MCF 10A (cell line): ENCODE measurements at regions of chr22 and their contacts with region 1.

Region 1: DNA sequence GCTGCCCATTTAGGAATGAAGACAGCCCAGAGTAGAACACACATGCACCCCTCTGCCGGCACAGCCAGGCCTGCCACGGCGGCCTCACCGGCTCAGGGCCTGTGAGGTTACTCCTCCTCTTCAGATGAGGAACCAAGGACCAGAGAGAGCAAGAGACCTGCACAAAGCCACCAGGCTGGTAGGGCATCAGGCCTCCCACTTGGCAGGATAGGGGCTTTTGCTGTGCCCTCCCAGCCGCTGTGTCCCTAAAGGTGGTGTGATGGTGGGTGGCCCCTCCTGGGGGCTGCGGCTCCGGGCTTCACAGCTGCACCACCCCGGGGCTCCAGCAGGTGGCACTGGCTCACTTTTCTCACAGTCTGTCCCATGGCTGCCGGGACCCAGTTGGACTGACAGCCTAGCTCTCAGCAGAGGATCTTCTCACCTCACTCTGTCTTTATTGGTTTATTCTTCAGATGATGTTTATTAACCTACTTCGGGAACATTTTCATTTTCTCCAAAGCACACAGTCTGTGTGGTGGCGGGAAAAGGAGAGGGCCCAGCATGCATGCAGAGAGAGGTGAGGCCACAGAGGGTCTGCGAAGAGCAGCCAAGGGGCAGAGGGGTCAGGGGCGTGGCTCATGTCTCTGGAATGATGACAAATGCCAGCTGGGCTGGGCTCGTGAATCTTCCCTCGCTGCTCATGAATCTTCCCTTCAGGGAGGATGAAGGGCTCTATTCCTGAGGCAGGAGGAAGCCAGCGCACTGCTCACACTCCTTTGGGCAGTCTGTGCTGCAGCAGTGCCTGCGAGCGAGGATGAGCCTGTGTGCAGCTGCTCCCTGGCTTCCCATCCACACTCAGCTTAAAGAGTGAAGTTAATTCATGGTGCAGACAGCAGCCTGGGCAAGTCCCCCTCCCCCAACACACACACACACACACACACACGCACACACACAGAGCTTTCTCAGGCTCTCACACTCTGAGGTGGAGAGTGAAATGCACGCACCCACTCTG is 101.1 kb upstream of the PITPNB start:
- DNase-seq: peak; percentile 62
- H3K4me3 Mint-ChIP-seq: no peak overlapping the region
- H3K27ac Mint-ChIP-seq: no peak overlapping the region
- H3K4me1 Mint-ChIP-seq: peaks cover 10% of the 10 kb centered on the region
- H3K27me3 Mint-ChIP-seq: peaks cover 13% of the 10 kb centered on the region
- CTCF ChIP-seq: peak; percentile 86

Region 2: DNA sequence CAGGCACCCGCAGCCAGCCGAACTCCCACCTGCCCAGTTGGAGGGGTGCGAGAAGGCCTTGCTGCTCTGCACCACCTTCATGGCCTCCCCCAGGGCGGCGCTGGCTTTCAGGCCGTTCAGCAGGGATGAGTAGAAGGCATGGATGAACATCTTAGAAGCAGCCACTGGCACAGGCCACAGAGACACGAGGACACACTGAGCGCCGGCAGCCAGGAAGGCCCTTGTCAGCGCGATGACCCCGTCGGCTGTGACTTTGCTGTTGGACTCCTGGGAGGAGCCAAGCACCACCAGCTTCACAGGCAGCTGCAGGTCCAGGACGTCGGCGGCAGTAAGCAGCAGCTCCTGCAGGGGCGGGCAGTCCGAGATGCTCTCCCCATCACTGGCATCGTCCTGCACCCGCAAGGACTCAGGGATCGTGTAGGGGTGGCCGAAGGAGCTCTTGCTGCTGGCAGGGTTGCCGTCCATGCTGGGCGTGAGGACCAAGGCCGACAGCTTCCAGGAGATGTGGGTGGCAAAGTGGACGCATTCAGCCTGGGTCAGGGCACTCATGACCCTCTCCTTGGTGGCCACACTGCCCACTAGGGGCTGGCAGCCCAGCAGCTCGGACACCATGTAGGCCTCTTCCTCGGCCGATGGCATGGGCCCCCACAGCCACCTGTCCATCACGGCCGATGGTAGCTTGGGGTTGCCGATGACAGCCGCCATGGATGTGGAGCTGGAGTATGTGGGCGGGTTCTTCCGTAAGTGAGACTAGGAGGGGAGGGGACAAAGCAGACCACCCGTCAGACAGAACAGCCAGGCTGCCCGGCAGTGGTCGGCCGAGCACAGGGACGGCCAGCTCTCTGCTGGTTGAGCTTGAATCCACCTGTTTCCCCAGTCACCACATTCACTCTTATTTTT is 21.4 kb before region 1 on chr22:
- CTCF ChIA-PET with region 1: interaction called, 10 read pairs
- POLR2A ChIA-PET with region 1: no interaction called
- intact Hi-C with region 1: no loop called
- DNase-seq: no peak
- H3K4me3 Mint-ChIP-seq: no peak overlapping the region
- H3K27ac Mint-ChIP-seq: no peak overlapping the region
- H3K4me1 Mint-ChIP-seq: peaks cover 6% of the 10 kb centered on the region
- H3K27me3 Mint-ChIP-seq: no peaks in the 10 kb centered on the region
- CTCF ChIP-seq: no peak

Region 3: GRCh38 chr22:28034760-28035401 is 14.7 kb after region 1 on chr22:
- CTCF ChIA-PET with region 1: interaction called, 17 read pairs
- POLR2A ChIA-PET with region 1: no interaction called
- intact Hi-C with region 1: no loop called
- DNase-seq: peak; percentile 38
- H3K4me3 Mint-ChIP-seq: no peak overlapping the region
- H3K27ac Mint-ChIP-seq: no peak overlapping the region
- H3K4me1 Mint-ChIP-seq: no peaks in the 10 kb centered on the region
- H3K27me3 Mint-ChIP-seq: peaks cover 46% of the 10 kb centered on the region
- CTCF ChIP-seq: no peak

Region 4: DNA sequence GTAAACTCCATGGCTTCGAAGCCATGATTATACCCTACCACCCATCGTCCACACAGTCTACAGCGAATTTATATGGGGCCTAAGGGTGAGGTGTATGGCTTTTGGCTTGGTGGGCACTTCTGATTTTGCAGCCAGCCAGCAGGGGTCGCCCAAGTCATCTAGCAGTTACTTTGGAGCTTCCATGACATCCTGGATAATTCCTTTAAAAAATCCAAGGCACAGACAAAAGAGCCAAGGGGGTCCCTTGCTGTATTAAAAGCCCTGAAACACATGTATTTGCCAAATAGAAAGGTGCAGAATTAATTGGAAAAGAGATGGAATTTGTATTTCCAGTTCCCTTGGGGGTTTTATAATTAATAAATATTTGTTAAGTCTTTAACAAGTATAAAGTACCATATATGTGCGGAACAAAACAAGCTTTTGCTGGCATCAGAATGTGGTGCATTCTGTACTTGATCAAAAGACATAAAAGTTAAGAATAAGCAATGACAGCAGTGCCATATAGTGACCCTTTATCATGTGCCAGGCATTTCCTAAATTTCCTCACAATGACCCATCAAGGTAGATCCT is 31.7 kb after region 1 on chr22:
- CTCF ChIA-PET with region 1: interaction called, 13 read pairs
- POLR2A ChIA-PET with region 1: no interaction called
- intact Hi-C with region 1: no loop called
- DNase-seq: peak; percentile 65
- H3K4me3 Mint-ChIP-seq: no peak overlapping the region
- H3K27ac Mint-ChIP-seq: no peak overlapping the region
- H3K4me1 Mint-ChIP-seq: no peaks in the 10 kb centered on the region
- H3K27me3 Mint-ChIP-seq: peaks cover 44% of the 10 kb centered on the region
- CTCF ChIP-seq: peak; percentile 85

Region 5: GRCh38 chr22:28600546-28601143 is 580.5 kb after region 1 on chr22:
- CTCF ChIA-PET with region 1: interaction called, 69 read pairs
- POLR2A ChIA-PET with region 1: no interaction called
- intact Hi-C with region 1: no loop called
- DNase-seq: peak; percentile 56
- H3K4me3 Mint-ChIP-seq: no peak overlapping the region
- H3K27ac Mint-ChIP-seq: no peak overlapping the region
- H3K4me1 Mint-ChIP-seq: no peaks in the 10 kb centered on the region
- H3K27me3 Mint-ChIP-seq: peaks cover 21% of the 10 kb centered on the region
- CTCF ChIP-seq: peak; percentile 41